A673 (cell line): ENCODE measurements at regions of chr12 and their contacts with region 1.

Region 1: GRCh38 chr12:62714774-62715721 is 219.9 kb downstream of the PPM1H start:
- DNase-seq: no peak
- H3K4me3 ChIP-seq: no peak overlapping the region
- H3K27ac ChIP-seq: no peak overlapping the region
- H3K4me1 ChIP-seq: peaks cover 3% of the 10 kb centered on the region
- H3K27me3 ChIP-seq: no peaks in the 10 kb centered on the region
- CTCF ChIP-seq: no peak

Region 2: GRCh38 chr12:62603061-62603810 is 111.8 kb before region 1 on chr12:
- CTCF ChIA-PET with region 1: no interaction called
- POLR2A ChIA-PET with region 1: no interaction called
- intact Hi-C with region 1: loop called (anchors 5 kb)
- DNase-seq: peak; percentile 93
- H3K4me3 ChIP-seq: peak overlapping the region; percentile 75
- H3K27ac ChIP-seq: peak overlapping the region; percentile 99
- H3K4me1 ChIP-seq: peaks cover 19% of the 10 kb centered on the region
- H3K27me3 ChIP-seq: no peaks in the 10 kb centered on the region
- CTCF ChIP-seq: peak; percentile 44

Region 3: GRCh38 chr12:62848421-62848820 is 133.4 kb after region 1 on chr12:
- CTCF ChIA-PET with region 1: no interaction called
- POLR2A ChIA-PET with region 1: no interaction called
- intact Hi-C with region 1: no loop called
- DNase-seq: no peak
- H3K4me3 ChIP-seq: no peak overlapping the region
- H3K27ac ChIP-seq: no peak overlapping the region
- H3K4me1 ChIP-seq: no peaks in the 10 kb centered on the region
- H3K27me3 ChIP-seq: no peaks in the 10 kb centered on the region
- CTCF ChIP-seq: no peak

Region 4: GRCh38 chr12:63521706-63522105 is 806.7 kb after region 1 on chr12:
- CTCF ChIA-PET with region 1: no interaction called
- POLR2A ChIA-PET with region 1: no interaction called
- intact Hi-C with region 1: no loop called
- DNase-seq: no peak
- H3K4me3 ChIP-seq: no peak overlapping the region
- H3K27ac ChIP-seq: no peak overlapping the region
- H3K4me1 ChIP-seq: no peaks in the 10 kb centered on the region
- H3K27me3 ChIP-seq: no peaks in the 10 kb centered on the region
- CTCF ChIP-seq: no peak